ENCODE measurements at regions of chr6 and their contacts with region 1.

Region 1: GRCh38 chr6:44172731-44173500 is 14.3 kb downstream of the CAPN11 start:
- DNase-seq: peak; percentile 88
- ATAC-seq: peak; percentile 89
- H3K4me3 Mint-ChIP-seq: no peak overlapping the region
- H3K27ac Mint-ChIP-seq: peak overlapping the region; percentile 51
- H3K4me1 Mint-ChIP-seq: peaks cover 34% of the 10 kb centered on the region
- H3K27me3 Mint-ChIP-seq: peaks cover 14% of the 10 kb centered on the region

Region 2: GRCh38 chr6:44034391-44034861 is 138.5 kb before region 1 on chr6:
- CTCF ChIA-PET with region 1: no interaction called
- POLR2A ChIA-PET with region 1: no interaction called
- DNase-seq: no peak
- ATAC-seq: no peak
- H3K4me3 Mint-ChIP-seq: no peak overlapping the region
- H3K27ac Mint-ChIP-seq: no peak overlapping the region
- H3K4me1 Mint-ChIP-seq: peaks cover 2% of the 10 kb centered on the region
- H3K27me3 Mint-ChIP-seq: peaks cover 5% of the 10 kb centered on the region

Region 3: DNA sequence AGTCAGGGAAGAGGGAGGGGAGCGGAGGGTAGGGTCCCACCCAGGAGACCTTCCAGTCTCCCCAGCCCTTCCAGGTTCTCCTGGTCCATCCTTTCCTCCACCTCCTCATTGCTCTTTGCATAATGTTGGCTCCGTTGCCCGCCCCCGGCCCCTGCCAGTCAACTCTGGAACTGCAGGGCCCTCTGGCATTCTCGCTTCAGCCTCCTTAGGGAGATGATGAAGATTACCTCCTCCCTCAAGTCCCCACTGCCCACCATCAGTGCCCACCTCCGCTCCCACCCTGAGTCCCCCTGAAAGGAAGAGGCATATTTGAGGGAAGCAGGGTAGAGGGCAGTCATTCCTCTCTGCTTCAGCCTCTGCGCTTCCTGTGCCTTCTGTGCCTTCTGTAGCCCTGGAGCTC is 37.0 kb before region 1 on chr6:
- CTCF ChIA-PET with region 1: no interaction called
- POLR2A ChIA-PET with region 1: no interaction called
- DNase-seq: no peak
- ATAC-seq: no peak
- H3K4me3 Mint-ChIP-seq: no peak overlapping the region
- H3K27ac Mint-ChIP-seq: no peak overlapping the region
- H3K4me1 Mint-ChIP-seq: peaks cover 2% of the 10 kb centered on the region
- H3K27me3 Mint-ChIP-seq: peaks cover 2% of the 10 kb centered on the region

Region 4: GRCh38 chr6:44161997-44162338 is 10.9 kb before region 1 on chr6:
- CTCF ChIA-PET with region 1: interaction called, 12 read pairs
- POLR2A ChIA-PET with region 1: no interaction called
- DNase-seq: no peak
- ATAC-seq: peak; percentile 15
- H3K4me3 Mint-ChIP-seq: no peak overlapping the region
- H3K27ac Mint-ChIP-seq: no peak overlapping the region
- H3K4me1 Mint-ChIP-seq: peaks cover 12% of the 10 kb centered on the region
- H3K27me3 Mint-ChIP-seq: peaks cover 14% of the 10 kb centered on the region

Region 5: GRCh38 chr6:44185953-44186634 is 13.2 kb after region 1 on chr6:
- CTCF ChIA-PET with region 1: interaction called, 13 read pairs
- POLR2A ChIA-PET with region 1: no interaction called
- DNase-seq: no peak
- ATAC-seq: peak; percentile 46
- H3K4me3 Mint-ChIP-seq: no peak overlapping the region
- H3K27ac Mint-ChIP-seq: peak overlapping the region; percentile 58
- H3K4me1 Mint-ChIP-seq: peaks cover 7% of the 10 kb centered on the region
- H3K27me3 Mint-ChIP-seq: peaks cover 5% of the 10 kb centered on the region

Region 6: GRCh38 chr6:44237813-44238433 is 65.0 kb after region 1 on chr6:
- CTCF ChIA-PET with region 1: interaction called, 20 read pairs
- POLR2A ChIA-PET with region 1: interaction called, 3 read pairs
- DNase-seq: peak; percentile 81
- ATAC-seq: peak; percentile 97
- H3K4me3 Mint-ChIP-seq: peak overlapping the region; percentile 80
- H3K27ac Mint-ChIP-seq: peak overlapping the region; percentile 94
- H3K4me1 Mint-ChIP-seq: peaks cover 32% of the 10 kb centered on the region
- H3K27me3 Mint-ChIP-seq: no peaks in the 10 kb centered on the region

Region 7: GRCh38 chr6:44246663-44247337 is 73.9 kb after region 1 on chr6 and contains the start of gene HSP90AB1:
- CTCF ChIA-PET with region 1: interaction called, 10 read pairs
- POLR2A ChIA-PET with region 1: interaction called, 7 read pairs
- DNase-seq: peak; percentile 97
- ATAC-seq: peak; percentile 80
- H3K4me3 Mint-ChIP-seq: peak within 1 kb of the TSS; percentile 98
- H3K27ac Mint-ChIP-seq: peak within 1 kb of the TSS; percentile 99
- H3K4me1 Mint-ChIP-seq: peaks cover 44% of the 10 kb centered on the region
- H3K27me3 Mint-ChIP-seq: no peaks in the 10 kb centered on the region
- total RNA-seq, gene HSP90AB1: 741 to 755 TPM

Region 8: GRCh38 chr6:44257025-44257752 is 84.3 kb after region 1 on chr6 and contains the start of gene SLC35B2:
- CTCF ChIA-PET with region 1: interaction called, 42 read pairs
- POLR2A ChIA-PET with region 1: interaction called, 3 read pairs
- DNase-seq: peak; percentile 72
- ATAC-seq: peak; percentile 60
- H3K4me3 Mint-ChIP-seq: peak within 1 kb of the TSS; percentile 85
- H3K27ac Mint-ChIP-seq: peak within 1 kb of the TSS; percentile 91
- H3K4me1 Mint-ChIP-seq: peaks cover 57% of the 10 kb centered on the region
- H3K27me3 Mint-ChIP-seq: no peaks in the 10 kb centered on the region
- total RNA-seq, gene SLC35B2: 31.6 to 32.8 TPM

Measured in activated CD8-positive, alpha-beta T cell treated with anti-CD3 and anti-CD28 coated beads, Interleukin-2, amount 10 ng/mL, durations not matched to agents 7 days and 5 days (primary cell).